PC-9 (cell line): ENCODE measurements at regions of chr2 and their contacts with region 1.

Region 1: DNA sequence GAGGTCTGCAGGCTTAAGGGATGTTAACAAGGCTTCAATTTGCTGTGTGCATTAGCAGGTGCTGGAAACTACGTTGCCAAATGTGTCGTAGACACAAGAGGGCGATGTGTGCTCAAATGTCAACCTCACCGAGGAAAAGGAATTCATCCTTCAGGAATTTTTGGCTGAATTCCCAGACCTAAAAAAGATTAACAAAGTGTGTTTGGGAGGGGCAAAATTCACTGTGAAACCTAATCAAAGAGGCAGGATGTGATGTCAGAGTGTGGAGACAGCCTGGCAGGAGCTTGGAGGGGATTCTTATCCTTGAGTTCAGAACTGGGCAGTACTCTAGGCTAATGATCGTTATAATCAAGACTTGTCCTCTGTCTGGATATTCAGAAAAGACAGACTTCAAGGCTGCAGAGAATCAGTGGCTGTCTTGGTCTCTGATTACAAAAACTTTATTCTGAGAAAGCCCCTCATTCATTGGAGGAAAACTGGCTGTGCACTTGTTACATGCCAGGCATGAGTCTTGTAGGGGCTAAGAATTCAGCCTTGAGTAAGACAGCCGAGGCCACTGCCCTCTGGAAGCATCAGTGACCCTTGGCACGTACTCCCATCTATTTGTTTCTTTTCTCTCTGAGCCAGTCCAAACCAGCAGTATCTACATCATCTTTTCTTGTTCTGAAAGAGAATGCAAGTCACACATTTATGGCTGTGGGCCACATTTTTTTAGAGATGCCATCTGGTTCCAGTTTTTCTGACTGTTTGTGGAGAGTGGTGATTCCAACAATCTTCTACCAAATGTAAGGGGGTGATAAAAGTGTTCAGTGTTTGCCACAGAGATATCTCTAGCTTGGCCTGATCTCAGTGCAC is 18.7 kb upstream of the SCYGR1 start:
- DNase-seq: peak; percentile 72 to 95
- H3K4me3 ChIP-seq: no peak overlapping the region
- H3K27ac ChIP-seq: peak overlapping the region; percentile 84
- H3K4me1 ChIP-seq: peaks cover 57% of the 10 kb centered on the region
- H3K27me3 ChIP-seq: no peaks in the 10 kb centered on the region
- CTCF ChIP-seq: peak; percentile 82

Region 2: GRCh38 chr2:227132986-227133385 is 273.4 kb before region 1 on chr2:
- CTCF ChIA-PET with region 1: no interaction called
- POLR2A ChIA-PET with region 1: no interaction called
- intact Hi-C with region 1: loop called (anchors 5 kb)
- DNase-seq: no peak
- H3K4me3 ChIP-seq: no peak overlapping the region
- H3K27ac ChIP-seq: no peak overlapping the region
- H3K4me1 ChIP-seq: no peaks in the 10 kb centered on the region
- H3K27me3 ChIP-seq: no peaks in the 10 kb centered on the region
- CTCF ChIP-seq: no peak

Region 3: DNA sequence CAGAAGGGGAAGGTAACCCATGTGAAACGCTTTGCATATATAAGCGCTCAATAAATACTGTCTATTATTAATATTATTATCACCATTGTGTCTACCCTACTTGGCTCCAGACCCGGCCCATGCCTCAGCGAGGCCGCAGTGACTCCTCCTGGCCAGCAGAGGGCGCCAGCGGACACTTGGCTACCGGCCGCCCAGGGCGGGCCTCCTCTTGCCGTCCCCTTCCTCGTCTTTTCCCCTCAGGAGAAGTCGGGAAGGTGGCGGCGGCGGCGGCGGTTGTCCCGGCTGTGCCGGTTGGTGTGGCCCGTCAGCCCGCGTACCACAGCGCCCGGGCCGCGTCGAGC is 65.5 kb after region 1 on chr2 and contains the start of gene AGFG1:
- CTCF ChIA-PET with region 1: interaction called, 3 read pairs
- POLR2A ChIA-PET with region 1: interaction called, 7 read pairs
- intact Hi-C with region 1: loop called (anchors 1 kb)
- DNase-seq: peak; percentile 63 to 87
- H3K4me3 ChIP-seq: peak within 1 kb of the TSS; percentile 96
- H3K27ac ChIP-seq: peak within 1 kb of the TSS; percentile 74
- H3K4me1 ChIP-seq: peaks cover 60% of the 10 kb centered on the region
- H3K27me3 ChIP-seq: no peaks in the 10 kb centered on the region
- CTCF ChIP-seq: peak; percentile 96
- total RNA-seq, gene AGFG1: 82.8 and 119 TPM in 2 replicates

Region 4: GRCh38 chr2:227655454-227655853 is 249.1 kb after region 1 on chr2:
- CTCF ChIA-PET with region 1: interaction called, 5 read pairs
- POLR2A ChIA-PET with region 1: no interaction called
- intact Hi-C with region 1: loop called (anchors 2 kb)
- DNase-seq: peak; percentile 12 to 81
- H3K4me3 ChIP-seq: no peak overlapping the region
- H3K27ac ChIP-seq: no peak overlapping the region
- H3K4me1 ChIP-seq: peaks cover 15% of the 10 kb centered on the region
- H3K27me3 ChIP-seq: no peaks in the 10 kb centered on the region
- CTCF ChIP-seq: no peak

Region 5: DNA sequence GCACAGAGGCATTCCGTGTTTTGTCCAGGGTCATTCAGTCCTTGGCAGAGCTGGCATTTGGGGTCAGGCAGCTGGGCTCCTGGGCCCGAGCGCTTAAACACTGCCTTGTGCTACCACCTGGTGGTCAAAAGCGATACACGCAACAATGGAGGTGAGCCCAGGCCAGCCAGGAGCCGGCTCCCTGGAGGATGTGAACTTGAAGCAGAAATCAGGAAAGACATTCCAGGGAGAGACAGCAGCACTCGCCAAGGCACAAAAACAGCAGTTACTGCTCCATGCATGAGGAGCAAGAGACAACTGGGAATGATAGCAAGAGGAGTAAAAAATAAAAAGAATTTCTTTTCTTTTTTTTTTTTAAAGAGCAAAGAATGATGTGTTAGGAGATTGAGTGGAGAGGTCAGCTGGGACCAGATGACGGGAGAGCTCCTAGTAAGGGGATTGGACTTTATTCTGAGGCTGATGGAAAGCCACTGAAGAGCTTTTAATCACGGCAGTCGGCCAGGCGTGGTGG is 360.0 kb after region 1 on chr2:
- CTCF ChIA-PET with region 1: interaction called, 6 read pairs
- POLR2A ChIA-PET with region 1: no interaction called
- intact Hi-C with region 1: loop called (anchors 1 kb)
- DNase-seq: peak; percentile 57 to 79
- H3K4me3 ChIP-seq: no peak overlapping the region
- H3K27ac ChIP-seq: no peak overlapping the region
- H3K4me1 ChIP-seq: peaks cover 12% of the 10 kb centered on the region
- H3K27me3 ChIP-seq: no peaks in the 10 kb centered on the region
- CTCF ChIP-seq: peak; percentile 93

Region 6: DNA sequence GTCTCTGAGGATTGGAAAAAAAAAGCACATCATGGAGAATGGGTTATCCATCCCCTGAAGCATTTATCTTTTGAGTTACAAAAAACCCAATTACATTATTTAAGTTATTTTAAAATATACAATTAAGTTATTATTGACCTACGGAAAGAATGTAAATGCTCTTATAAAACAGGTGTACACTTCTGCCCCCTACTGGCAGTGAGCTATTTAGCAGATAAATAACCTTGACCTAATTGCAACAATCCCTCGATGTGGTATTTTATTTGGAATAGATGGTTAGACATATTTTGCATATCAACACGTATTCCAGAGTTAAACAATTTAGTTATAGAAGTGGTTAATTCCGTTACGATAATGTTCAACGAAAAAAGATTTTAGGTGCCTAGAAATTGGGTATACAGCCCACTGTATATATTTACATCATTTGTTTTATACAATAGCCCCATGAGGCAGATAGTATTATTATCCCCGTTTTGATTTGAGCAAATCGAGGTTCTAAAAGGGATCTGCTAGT is 455.9 kb after region 1 on chr2:
- CTCF ChIA-PET with region 1: no interaction called
- POLR2A ChIA-PET with region 1: no interaction called
- intact Hi-C with region 1: loop called (anchors 2 kb)
- DNase-seq: no peak
- H3K4me3 ChIP-seq: no peak overlapping the region
- H3K27ac ChIP-seq: peak overlapping the region; percentile 93
- H3K4me1 ChIP-seq: peaks cover 29% of the 10 kb centered on the region
- H3K27me3 ChIP-seq: no peaks in the 10 kb centered on the region
- CTCF ChIP-seq: peak; percentile 75